Heart right ventricle (tissue), 16 donors: ENCODE measurements at regions of chr3 and their contacts with region 1.

Region 1: DNA sequence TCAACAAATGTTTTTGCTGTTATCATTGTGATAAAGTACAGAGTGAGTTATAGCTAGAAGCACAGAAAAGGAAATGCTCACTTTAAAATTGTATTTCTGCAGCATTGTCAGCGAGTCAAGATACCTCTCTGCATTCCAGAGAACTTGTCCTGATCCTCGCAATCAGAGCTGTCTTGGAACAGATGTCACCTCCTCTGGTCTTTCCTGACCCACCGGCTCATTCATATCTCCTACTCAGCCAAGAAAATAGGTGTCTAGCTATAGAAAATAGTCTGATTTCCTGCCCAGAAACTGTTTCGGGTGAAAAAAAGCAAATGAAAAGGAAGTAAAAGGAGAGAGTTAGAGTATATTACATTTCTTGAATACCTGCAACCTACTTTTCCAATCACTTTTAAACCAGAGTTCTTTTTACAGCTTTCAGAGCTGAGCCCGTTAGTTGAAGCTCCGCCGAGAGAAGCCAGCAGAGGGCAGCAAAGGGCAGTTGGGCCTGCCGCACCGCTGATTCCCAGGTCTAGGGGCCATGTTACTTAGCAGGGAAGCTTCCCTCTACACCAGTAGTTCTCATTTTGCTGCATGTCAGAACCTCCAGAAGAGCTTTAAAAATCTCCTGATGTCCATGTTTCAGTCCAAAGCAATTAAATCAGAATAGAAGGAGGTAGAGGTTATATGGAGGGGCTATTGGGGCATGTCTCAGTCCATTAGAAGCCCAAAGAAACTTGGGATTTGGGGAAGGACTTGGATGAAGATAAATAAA is 185.7 kb upstream of the THRB start:
- DNase-seq: peak; percentile 47 to 68
- ATAC-seq: peak in 6 of 8 donors; percentile 64 to 82 (median 76)
- H3K4me3 ChIP-seq: no peak overlapping the region
- H3K27ac ChIP-seq: no peak overlapping the region
- H3K4me1 ChIP-seq: peaks cover 0 to 4% (median 0%) of the 10 kb centered on the region in 9 donors
- H3K27me3 ChIP-seq: peaks cover 0 to 4% (median 0%) of the 10 kb centered on the region in 7 donors
- CTCF ChIP-seq: peak; percentile 55 to 90 (median 85)

Region 2: GRCh38 chr3:24004171-24004938 is 676.0 kb before region 1 on chr3:
- intact Hi-C with region 1: loop called (anchors 2 to 10 kb)
- DNase-seq: no peak
- ATAC-seq: no peak
- H3K4me3 ChIP-seq: no peak overlapping the region
- H3K27ac ChIP-seq: no peak overlapping the region
- H3K4me1 ChIP-seq: peaks cover 0 to 3% (median 0%) of the 10 kb centered on the region in 9 donors
- H3K27me3 ChIP-seq: no peaks in the 10 kb centered on the region
- CTCF ChIP-seq: no peak

Region 3: DNA sequence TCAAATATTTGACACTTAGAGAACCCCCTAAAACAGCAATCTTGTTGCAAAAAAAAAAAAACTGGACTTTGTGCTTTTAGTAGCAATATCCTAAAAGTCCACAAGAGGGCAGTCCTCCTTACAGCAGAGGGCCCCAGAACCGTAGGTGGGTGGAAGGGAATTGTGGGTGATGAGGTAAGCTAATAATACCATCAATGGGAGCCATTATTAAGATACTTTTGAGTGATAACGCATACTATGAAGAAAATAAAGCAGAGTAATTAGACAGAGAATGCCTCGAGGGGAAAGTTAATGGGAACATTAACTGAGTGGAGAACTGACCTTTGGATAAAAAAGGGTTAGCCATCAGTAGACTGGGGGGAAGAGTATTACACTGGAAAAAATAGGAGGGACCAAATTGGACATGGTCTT is 415.6 kb before region 1 on chr3:
- intact Hi-C with region 1: loop called in 1 of 10 experiments (anchors 5 kb)
- DNase-seq: no peak
- ATAC-seq: peak in 4 of 8 donors; percentile 17 to 67 (median 48)
- H3K4me3 ChIP-seq: no peak overlapping the region
- H3K27ac ChIP-seq: no peak overlapping the region
- H3K4me1 ChIP-seq: peaks cover 0 to 16% (median 0%) of the 10 kb centered on the region in 9 donors
- H3K27me3 ChIP-seq: no peaks in the 10 kb centered on the region
- CTCF ChIP-seq: peak; percentile 48 to 80 (median 69)

Region 4: DNA sequence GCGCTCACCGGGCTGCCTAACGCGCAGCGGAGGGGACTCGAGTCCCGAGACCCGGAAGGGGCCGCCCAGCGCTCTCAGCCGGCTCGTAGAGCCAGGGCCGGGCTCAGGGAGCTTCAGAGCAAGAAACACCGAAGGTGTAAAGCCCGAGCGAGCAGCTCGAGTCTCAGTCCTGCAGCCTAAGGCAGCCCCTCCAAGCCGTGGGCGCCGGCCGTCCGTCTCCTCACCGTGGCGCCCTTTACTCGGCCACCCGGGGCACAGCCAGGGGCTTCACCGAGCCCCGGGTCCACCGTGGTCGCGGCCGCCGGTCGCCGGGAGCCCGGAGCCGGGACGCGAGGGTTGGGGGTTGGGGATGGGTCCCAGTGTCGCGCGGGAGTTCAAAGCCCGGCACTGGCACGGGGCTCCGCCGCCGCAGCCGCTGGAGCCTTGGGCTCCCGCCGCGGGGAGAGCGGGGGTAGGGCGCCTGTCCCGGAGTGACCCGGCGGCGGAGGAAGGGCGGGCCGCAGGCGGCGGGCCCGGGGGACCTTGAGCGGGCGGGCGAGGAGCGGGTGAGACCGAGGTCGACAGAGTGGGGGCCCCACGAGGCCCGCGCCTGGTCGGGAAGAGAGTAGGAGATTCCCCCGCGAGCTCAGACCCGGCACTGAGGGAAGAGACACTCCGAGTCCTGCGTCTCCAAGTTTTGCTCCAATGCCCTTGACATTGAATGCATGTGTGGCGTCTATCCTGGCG is 158.8 kb before region 1 on chr3:
- intact Hi-C with region 1: loop called in 1 of 10 experiments (anchors 5 kb)
- DNase-seq: peak; percentile 51 to 80
- ATAC-seq: peak; percentile 91 to 98 (median 94)
- H3K4me3 ChIP-seq: peak overlapping the region; percentile 58 to 87 (median 72)
- H3K27ac ChIP-seq: peak overlapping the region; percentile 47 to 94 (median 86)
- H3K4me1 ChIP-seq: peaks cover 0 to 22% (median 6%) of the 10 kb centered on the region in 9 donors
- H3K27me3 ChIP-seq: peaks cover 0 to 42% (median 0%) of the 10 kb centered on the region in 7 donors
- CTCF ChIP-seq: peak in 4 of 9 donors; percentile 16 to 51 (median 49)

Region 5: GRCh38 chr3:24573576-24573975 is 106.8 kb before region 1 on chr3:
- intact Hi-C with region 1: no loop called
- DNase-seq: no peak
- ATAC-seq: no peak
- H3K4me3 ChIP-seq: no peak overlapping the region
- H3K27ac ChIP-seq: no peak overlapping the region
- H3K4me1 ChIP-seq: no peaks in the 10 kb centered on the region
- H3K27me3 ChIP-seq: no peaks in the 10 kb centered on the region
- CTCF ChIP-seq: no peak